Transverse colon (tissue), 4 donors: ENCODE measurements at regions of chr9 and their contacts with region 1.

Region 1: DNA sequence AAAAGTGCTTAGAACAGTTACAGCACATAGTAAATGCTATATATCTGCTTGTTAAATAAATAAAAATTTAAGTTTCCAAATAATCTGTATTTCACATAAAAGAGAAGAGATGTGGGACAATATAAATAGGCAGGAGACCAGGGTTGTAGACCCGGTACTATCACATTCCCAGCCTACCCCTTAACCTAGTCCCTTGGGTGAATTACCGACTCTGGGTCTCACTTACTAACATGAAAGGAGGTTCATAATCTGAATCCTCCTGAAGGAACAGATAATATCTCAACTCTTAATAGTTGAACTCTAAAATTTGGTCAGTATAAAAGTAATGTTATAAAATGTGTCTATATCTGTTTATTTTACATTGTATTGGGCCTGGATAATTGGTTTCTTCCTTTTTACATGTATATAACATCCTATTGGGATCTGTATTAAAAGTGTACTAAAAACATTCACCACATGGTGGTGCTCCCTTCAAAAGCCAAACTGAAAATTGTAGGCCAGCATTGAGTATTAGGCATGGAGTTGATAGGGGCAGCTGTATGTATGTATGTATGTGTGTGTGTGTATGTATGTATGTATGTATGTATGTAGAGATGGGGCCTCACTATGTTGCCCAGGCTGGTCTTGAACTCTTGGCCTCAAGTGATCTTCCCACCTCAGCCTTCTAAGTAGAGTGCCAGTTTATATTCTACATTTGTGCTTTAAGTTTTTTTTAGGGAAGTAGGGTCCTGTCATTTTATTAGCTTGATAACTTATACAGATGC is 64.2 kb upstream of the ABL1 start:
- DNase-seq: no peak
- H3K4me3 ChIP-seq: no peak overlapping the region
- H3K27ac ChIP-seq: peak overlapping the region; percentile 78 to 88 (median 84)
- H3K4me1 ChIP-seq: peaks cover 22 to 63% (median 47%) of the 10 kb centered on the region in 4 donors
- H3K27me3 ChIP-seq: no peaks in the 10 kb centered on the region
- CTCF ChIP-seq: peak; percentile 60 to 72 (median 62)
- EP300 ChIP-seq: no peak
- POLR2A ChIP-seq: no peak

Region 2: GRCh38 chr9:130396581-130396980 is 374.3 kb before region 1 on chr9:
- in situ Hi-C with region 1: no loop called
- intact Hi-C with region 1: no loop called
- DNase-seq: no peak
- H3K4me3 ChIP-seq: no peak overlapping the region
- H3K27ac ChIP-seq: no peak overlapping the region
- H3K4me1 ChIP-seq: peaks cover 0 to 8% (median 2%) of the 10 kb centered on the region in 4 donors
- H3K27me3 ChIP-seq: no peaks in the 10 kb centered on the region
- CTCF ChIP-seq: no peak
- EP300 ChIP-seq: no peak
- POLR2A ChIP-seq: no peak

Region 3: GRCh38 chr9:130451509-130452388 is 319.1 kb before region 1 on chr9:
- in situ Hi-C with region 1: no loop called
- intact Hi-C with region 1: no loop called
- DNase-seq: peak; percentile 87
- H3K4me3 ChIP-seq: no peak overlapping the region
- H3K27ac ChIP-seq: peak overlapping the region; percentile 56 to 79 (median 74)
- H3K4me1 ChIP-seq: peaks cover 27 to 43% (median 38%) of the 10 kb centered on the region in 4 donors
- H3K27me3 ChIP-seq: no peaks in the 10 kb centered on the region
- CTCF ChIP-seq: peak; percentile 40 to 66 (median 44)
- EP300 ChIP-seq: no peak
- POLR2A ChIP-seq: peak; percentile 20

Region 4: GRCh38 chr9:130701056-130702022 is 69.5 kb before region 1 on chr9:
- in situ Hi-C with region 1: loop called in 1 of 4 experiments (anchors 10 kb)
- intact Hi-C with region 1: no loop called
- DNase-seq: peak; percentile 85
- H3K4me3 ChIP-seq: no peak overlapping the region
- H3K27ac ChIP-seq: peak overlapping the region in 3 of 4 donors; percentile 6 to 50 (median 23)
- H3K4me1 ChIP-seq: peaks cover 0 to 10% (median 3%) of the 10 kb centered on the region in 4 donors
- H3K27me3 ChIP-seq: no peaks in the 10 kb centered on the region
- CTCF ChIP-seq: peak; percentile 90 to 96 (median 94)
- EP300 ChIP-seq: no peak
- POLR2A ChIP-seq: no peak

Region 5: DNA sequence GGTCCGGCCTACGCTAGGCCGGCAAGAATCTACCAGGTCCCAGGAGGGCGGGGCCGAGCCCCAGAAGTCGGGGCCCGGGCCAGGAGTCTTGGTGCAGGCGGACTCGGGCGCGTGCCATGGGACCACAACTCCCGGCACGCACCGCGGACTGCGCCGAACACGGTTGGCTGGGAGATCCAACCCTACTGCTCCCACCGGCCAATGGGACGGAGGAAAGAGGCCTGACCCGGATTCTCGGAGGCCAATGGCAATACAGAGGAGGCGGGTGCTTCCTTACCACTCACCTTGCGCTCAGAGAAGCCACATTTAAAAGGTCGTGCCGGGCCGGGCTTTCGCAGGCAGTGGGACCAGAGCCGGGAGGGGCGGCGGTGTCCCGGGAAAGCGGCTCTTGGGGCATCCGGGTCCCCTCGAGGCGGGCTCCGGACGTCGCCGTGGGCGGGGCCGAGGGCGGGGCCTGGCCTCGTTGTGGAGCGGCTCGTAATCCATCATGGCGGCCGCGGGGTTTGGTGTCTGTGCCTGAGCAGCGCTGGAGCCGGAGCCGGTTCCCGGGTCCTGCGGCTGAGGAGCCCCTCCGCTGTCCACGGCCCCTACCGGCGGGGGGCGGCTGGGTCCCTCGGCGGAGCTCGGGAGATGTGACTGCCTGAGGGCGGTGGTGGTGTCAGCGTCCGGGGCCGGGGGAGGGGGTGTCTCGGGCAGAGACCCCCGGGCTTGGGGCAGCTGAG is 58.1 kb before region 1 on chr9:
- in situ Hi-C with region 1: loop called in 2 of 4 experiments (anchors 10 kb)
- intact Hi-C with region 1: no loop called
- DNase-seq: peak; percentile 98
- H3K4me3 ChIP-seq: peak overlapping the region; percentile 78 to 97 (median 94)
- H3K27ac ChIP-seq: peak overlapping the region; percentile 96 to 99 (median 98)
- H3K4me1 ChIP-seq: peaks cover 0 to 44% (median 30%) of the 10 kb centered on the region in 4 donors
- H3K27me3 ChIP-seq: no peaks in the 10 kb centered on the region
- CTCF ChIP-seq: no peak
- EP300 ChIP-seq: no peak
- POLR2A ChIP-seq: peak; percentile 85

Region 6: DNA sequence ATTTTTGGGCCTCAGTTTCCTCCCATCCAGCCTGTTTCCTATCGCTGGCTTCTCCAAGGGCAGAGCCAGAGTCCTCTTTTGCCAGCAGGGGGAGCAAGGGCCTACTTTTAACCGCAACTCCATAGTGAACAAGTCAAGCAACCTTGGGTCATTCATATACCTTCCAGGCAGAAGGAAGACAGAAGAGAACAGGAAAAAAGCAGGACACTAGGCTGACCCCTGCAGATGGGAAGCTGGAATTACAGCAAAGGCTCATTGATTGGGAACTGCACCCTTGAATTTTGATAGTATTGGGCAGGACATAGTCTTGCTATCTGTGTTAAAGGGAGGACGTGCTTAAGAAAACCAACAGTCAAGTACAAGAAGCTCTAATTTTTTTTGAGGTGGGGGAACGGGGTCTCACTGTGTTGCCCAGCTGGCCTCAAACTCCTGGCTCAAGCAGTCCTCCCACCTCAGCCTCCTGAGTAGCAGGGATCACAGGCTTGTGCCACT is 95.7 kb after region 1 on chr9:
- in situ Hi-C with region 1: loop called in 3 of 4 experiments (anchors 5 to 25 kb)
- intact Hi-C with region 1: loop called (anchors 2 kb)
- DNase-seq: peak; percentile 86
- H3K4me3 ChIP-seq: no peak overlapping the region
- H3K27ac ChIP-seq: peak overlapping the region in 1 of 4 donors; percentile 46
- H3K4me1 ChIP-seq: peaks cover 4 to 68% (median 29%) of the 10 kb centered on the region in 4 donors
- H3K27me3 ChIP-seq: no peaks in the 10 kb centered on the region
- CTCF ChIP-seq: peak; percentile 77 to 98 (median 90)
- EP300 ChIP-seq: no peak
- POLR2A ChIP-seq: no peak